Esophagus squamous epithelium (tissue), 5 donors: ENCODE measurements at regions of chr12 and their contacts with region 1.

Region 1: GRCh38 chr12:117836999-117837736 is 131.6 kb downstream of the KSR2 start:
- DNase-seq: no peak
- H3K4me3 ChIP-seq: peak overlapping the region in 1 of 4 donors; percentile 15
- H3K27ac ChIP-seq: no peak overlapping the region
- H3K4me1 ChIP-seq: peaks cover 0 to 4% (median 0%) of the 10 kb centered on the region in 3 donors
- H3K27me3 ChIP-seq: peaks cover 0 to 63% (median 0%) of the 10 kb centered on the region in 4 donors
- CTCF ChIP-seq: peak; percentile 82 to 96 (median 92)
- POLR2A ChIP-seq: no peak

Region 2: DNA sequence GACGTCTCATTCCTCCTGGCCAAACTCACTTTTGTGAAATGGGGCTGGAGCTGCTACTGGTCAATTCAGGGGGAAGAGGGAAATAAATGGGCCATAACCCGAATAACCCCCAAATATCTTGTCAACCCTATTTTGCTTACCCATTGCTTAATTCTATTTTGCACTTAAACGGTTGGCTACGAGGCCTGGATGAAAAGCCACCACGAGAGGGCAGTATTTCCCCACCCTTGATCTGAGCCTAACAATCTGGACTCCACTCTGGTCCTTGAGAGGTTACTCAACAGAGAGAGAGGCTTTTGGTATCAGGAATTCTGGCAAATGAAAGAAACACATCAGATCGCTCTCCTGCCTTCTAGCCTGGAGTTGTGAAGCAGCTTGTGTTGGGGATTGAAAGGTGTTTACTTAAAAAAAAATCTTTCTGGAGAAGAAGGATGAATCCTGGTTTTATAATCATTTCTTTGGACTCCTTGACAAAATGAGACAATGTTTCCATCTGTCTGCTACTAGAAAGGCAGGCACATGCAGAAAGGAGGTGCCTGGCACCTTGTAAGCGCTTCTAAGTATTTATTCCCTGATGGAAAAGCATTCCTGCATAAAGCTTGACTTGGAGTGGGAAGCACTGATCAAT is 624.5 kb before region 1 on chr12:
- intact Hi-C with region 1: loop called (anchors 5 kb)
- DNase-seq: no peak
- H3K4me3 ChIP-seq: no peak overlapping the region
- H3K27ac ChIP-seq: no peak overlapping the region
- H3K4me1 ChIP-seq: peaks cover 0 to 6% (median 0%) of the 10 kb centered on the region in 3 donors
- H3K27me3 ChIP-seq: peaks cover 0 to 45% (median 0%) of the 10 kb centered on the region in 4 donors
- CTCF ChIP-seq: peak; percentile 76 to 92 (median 82)
- POLR2A ChIP-seq: no peak

Region 3: DNA sequence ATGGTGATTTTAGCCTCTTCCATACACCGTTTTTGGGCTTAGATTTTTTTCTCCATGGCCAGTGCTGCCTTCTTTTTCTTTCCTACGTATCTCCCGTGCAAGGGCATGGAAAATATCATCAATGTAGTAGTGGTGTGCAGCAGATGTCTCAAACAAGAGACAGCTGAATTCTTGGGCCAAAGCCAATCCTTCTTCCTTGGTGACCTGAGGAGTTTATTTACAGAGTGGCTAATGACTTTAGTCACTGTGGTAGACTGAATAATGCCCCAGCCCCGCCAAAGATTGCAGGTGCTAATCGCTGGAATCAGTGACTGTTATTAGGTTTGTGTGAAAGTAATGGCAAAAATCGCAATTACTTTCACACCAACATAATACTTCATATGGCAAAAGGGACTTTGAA is 240.2 kb before region 1 on chr12:
- intact Hi-C with region 1: loop called (anchors 10 kb)
- DNase-seq: no peak
- H3K4me3 ChIP-seq: no peak overlapping the region
- H3K27ac ChIP-seq: no peak overlapping the region
- H3K4me1 ChIP-seq: no peaks in the 10 kb centered on the region
- H3K27me3 ChIP-seq: peaks cover 0 to 31% (median 0%) of the 10 kb centered on the region in 4 donors
- CTCF ChIP-seq: no peak
- POLR2A ChIP-seq: no peak

Region 4: DNA sequence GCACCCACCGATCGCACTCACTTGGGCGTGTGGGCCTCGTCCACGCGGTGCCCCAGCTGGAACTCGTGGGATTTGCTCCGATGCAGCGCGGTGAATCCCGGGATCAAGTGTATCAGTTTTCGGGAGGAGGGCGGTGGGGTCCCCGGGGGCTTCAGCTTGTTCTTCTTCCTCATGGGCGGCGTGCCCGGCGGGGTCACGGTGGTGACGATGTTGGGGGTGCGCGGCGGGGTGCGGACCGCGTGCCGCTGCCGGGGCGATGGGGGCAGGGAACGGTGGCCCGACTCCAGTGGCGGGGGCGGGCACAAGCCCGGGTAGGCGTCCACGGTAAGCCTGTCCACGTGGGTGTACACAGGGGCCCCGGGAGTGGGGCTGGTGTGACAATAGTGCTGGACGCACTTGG is 76.2 kb before region 1 on chr12:
- intact Hi-C with region 1: no loop called
- DNase-seq: no peak
- H3K4me3 ChIP-seq: no peak overlapping the region
- H3K27ac ChIP-seq: no peak overlapping the region
- H3K4me1 ChIP-seq: no peaks in the 10 kb centered on the region
- H3K27me3 ChIP-seq: peaks cover 0 to 5% (median 0%) of the 10 kb centered on the region in 4 donors
- CTCF ChIP-seq: no peak
- POLR2A ChIP-seq: no peak